ENCODE measurements at regions of chr4 and their contacts with region 1.

Region 1: DNA sequence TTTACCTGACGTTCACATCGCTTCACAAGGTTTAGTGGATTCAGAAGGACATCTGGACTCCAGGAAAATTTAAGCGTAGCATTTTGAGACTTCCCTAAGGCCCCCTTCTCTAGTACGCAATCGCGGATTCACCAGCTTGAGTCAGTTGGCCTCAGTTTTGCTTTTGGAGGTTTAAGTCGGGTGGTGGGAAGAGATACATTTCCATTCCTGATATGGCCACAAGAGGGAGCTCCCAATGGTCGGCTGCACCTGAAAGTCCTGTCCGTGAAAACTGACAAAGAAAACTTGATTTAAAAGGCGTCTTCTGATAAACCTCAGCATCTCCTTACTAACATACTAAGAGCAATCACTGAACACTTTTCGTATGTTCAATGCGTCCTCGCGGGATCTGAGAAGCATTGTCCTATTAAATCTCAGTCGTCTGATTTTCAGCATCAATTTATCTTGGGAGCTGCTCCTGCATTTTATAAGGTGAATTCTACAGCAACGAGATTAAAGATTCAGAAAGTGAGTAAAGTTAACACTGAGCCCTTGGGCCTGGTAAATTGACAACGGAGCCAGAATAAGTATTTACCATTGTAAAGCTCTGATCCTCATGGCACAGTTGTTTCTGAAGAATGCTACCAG is 50.6 kb downstream of the LGI2 start:
- DNase-seq: no peak
- H3K4me3 ChIP-seq: peak overlapping the region; percentile 48
- H3K27ac ChIP-seq: peak overlapping the region; percentile 89
- H3K4me1 ChIP-seq: peaks cover 45% of the 10 kb centered on the region
- H3K27me3 ChIP-seq: no peaks in the 10 kb centered on the region
- CTCF ChIP-seq: peak; percentile 95

Region 2: DNA sequence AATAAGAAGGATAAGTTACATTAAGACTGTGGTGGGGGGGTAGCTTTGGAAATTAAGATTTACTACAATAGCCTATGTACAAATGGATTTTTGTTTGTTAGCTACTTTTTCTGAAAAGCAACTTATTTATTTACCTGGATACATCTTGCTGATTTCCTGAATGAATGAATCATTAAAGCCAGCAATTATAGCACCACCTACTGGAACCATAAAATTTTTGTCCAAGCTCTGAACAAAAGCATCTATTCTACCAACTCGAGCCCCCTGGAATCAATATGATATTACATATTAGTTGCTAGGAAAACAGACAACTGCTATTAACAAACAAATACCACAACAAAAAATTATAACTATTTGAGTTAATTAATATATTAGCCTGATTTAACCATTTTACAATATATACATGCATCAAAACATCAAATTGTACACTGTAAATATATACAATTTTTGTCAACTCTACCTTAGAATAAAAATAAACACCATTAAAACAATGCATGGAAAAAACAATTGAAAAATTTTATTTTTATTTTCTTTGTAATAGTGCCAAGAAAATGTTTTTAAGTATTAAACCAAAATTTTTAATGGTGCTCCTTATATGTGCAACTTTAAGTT is 164.8 kb after region 1 on chr4:
- intact Hi-C with region 1: loop called (anchors 10 kb)
- DNase-seq: no peak
- H3K4me3 ChIP-seq: no peak overlapping the region
- H3K27ac ChIP-seq: no peak overlapping the region
- H3K4me1 ChIP-seq: peaks cover 12% of the 10 kb centered on the region
- H3K27me3 ChIP-seq: no peaks in the 10 kb centered on the region
- CTCF ChIP-seq: peak; percentile 72